Caco-2 (cell line): ENCODE measurements at regions of chr15 and their contacts with region 1.

Region 1: GRCh38 chr15:46723308-46723707 is 994.0 kb upstream of the SEMA6D start:
- DNase-seq: no peak
- H3K4me3 ChIP-seq: no peak overlapping the region
- H3K4me3 Mint-ChIP-seq: no peak overlapping the region
- H3K27ac Mint-ChIP-seq: no peak overlapping the region
- H3K4me1 ChIP-seq: no peaks in the 10 kb centered on the region
- H3K4me1 Mint-ChIP-seq: no peaks in the 10 kb centered on the region
- H3K27me3 ChIP-seq: no peaks in the 10 kb centered on the region
- H3K27me3 Mint-ChIP-seq: no peaks in the 10 kb centered on the region
- CTCF ChIP-seq: no peak

Region 2: DNA sequence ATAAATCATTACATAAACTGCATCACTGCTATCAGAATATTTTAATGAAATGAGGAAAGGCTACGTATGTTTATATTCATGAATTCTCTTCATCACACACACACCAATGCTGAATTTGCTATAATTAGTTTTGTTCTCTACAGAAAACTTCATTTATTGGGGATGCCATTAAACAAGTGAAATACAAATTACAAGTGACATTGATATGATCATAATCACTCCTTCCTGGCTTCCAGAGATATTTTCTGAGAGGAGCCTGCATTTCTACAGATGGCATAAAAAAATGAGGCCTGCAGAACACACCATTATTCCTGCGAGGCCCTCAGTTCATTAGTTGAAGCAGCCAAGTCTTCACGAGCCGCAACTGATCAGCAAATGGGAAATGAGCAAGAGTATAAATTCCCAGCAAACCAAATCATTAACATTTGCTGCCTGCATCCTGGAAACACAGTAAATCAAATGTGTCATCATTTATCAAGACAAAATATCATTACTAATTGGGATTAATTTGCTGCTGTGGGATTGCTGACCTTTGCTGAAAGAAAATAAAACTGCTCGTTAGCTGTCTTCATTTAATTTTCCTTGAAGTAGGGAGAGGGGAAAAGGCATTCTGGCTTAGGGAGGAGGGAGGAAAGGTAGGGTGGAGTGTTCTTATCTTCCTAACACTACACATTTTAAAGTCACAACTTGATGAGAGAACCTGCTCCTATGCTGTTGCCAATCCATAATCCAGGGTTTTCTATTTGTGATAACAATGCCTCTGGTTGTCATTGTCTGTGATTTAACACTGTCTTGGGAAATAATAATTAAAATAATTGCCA is 166.5 kb before region 1 on chr15:
- CTCF ChIA-PET with region 1: no interaction called
- POLR2A ChIA-PET with region 1: no interaction called
- intact Hi-C with region 1: no loop called
- DNase-seq: no peak
- H3K4me3 ChIP-seq: no peak overlapping the region
- H3K4me3 Mint-ChIP-seq: no peak overlapping the region
- H3K27ac Mint-ChIP-seq: no peak overlapping the region
- H3K4me1 ChIP-seq: no peaks in the 10 kb centered on the region
- H3K4me1 Mint-ChIP-seq: peaks cover 12% of the 10 kb centered on the region
- H3K27me3 ChIP-seq: no peaks in the 10 kb centered on the region
- H3K27me3 Mint-ChIP-seq: no peaks in the 10 kb centered on the region
- CTCF ChIP-seq: no peak

Region 3: GRCh38 chr15:46576646-46577395 is 146.5 kb before region 1 on chr15:
- CTCF ChIA-PET with region 1: no interaction called
- POLR2A ChIA-PET with region 1: no interaction called
- intact Hi-C with region 1: no loop called
- DNase-seq: peak; percentile 49 to 70
- H3K4me3 ChIP-seq: no peak overlapping the region
- H3K4me3 Mint-ChIP-seq: peak overlapping the region; percentile 10
- H3K27ac Mint-ChIP-seq: peak overlapping the region; percentile 83
- H3K4me1 ChIP-seq: peaks cover 17% of the 10 kb centered on the region
- H3K4me1 Mint-ChIP-seq: peaks cover 8% of the 10 kb centered on the region
- H3K27me3 ChIP-seq: no peaks in the 10 kb centered on the region
- H3K27me3 Mint-ChIP-seq: no peaks in the 10 kb centered on the region
- CTCF ChIP-seq: no peak

Region 4: GRCh38 chr15:46766021-46766420 is 42.7 kb after region 1 on chr15:
- CTCF ChIA-PET with region 1: no interaction called
- POLR2A ChIA-PET with region 1: no interaction called
- intact Hi-C with region 1: loop called (anchors 1 kb)
- DNase-seq: peak in 1 of 2 experiments; percentile 11
- H3K4me3 ChIP-seq: no peak overlapping the region
- H3K4me3 Mint-ChIP-seq: no peak overlapping the region
- H3K27ac Mint-ChIP-seq: peak overlapping the region; percentile 26
- H3K4me1 ChIP-seq: peaks cover 15% of the 10 kb centered on the region
- H3K4me1 Mint-ChIP-seq: no peaks in the 10 kb centered on the region
- H3K27me3 ChIP-seq: no peaks in the 10 kb centered on the region
- H3K27me3 Mint-ChIP-seq: no peaks in the 10 kb centered on the region
- CTCF ChIP-seq: no peak